ENCODE measurements at regions of chr16 and their contacts with region 1.

Region 1: DNA sequence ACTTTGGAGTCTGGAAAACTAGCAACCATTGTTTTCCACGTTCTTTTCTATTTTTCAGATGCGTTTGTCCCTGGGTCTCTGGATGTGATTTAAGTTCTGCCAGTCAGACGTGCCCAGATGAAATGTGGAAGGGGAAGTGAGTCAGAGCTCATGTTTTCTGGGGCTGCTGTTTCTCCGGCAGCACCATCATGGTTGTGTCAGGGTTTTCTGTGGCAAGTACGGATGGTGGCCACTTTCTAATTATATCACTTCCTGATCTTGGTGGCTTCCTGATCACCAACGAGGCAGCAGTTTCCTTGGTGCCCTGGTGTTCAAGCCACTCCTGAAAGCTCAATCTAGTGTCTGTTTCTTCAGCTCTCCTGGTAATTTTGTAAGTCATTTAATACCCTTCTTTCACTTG is 31.4 kb upstream of the PMFBP1 start:
- DNase-seq: no peak
- H3K4me3 ChIP-seq: no peak overlapping the region
- H3K4me3 Mint-ChIP-seq: no peak overlapping the region
- H3K27ac Mint-ChIP-seq: no peak overlapping the region
- H3K4me1 ChIP-seq: peaks cover 14% of the 10 kb centered on the region
- H3K4me1 Mint-ChIP-seq: peaks cover 12% of the 10 kb centered on the region
- H3K27me3 ChIP-seq: peaks cover 2% of the 10 kb centered on the region; the same call in 1 of the 2 replicates
- H3K27me3 Mint-ChIP-seq: peaks cover 19% of the 10 kb centered on the region
- CTCF ChIP-seq: no peak

Region 2: GRCh38 chr16:72224260-72224768 is 20.9 kb after region 1 on chr16:
- CTCF ChIA-PET with region 1: no interaction called
- POLR2A ChIA-PET with region 1: no interaction called
- intact Hi-C with region 1: loop called (anchors 1 kb)
- DNase-seq: peak; percentile 67 to 70
- H3K4me3 ChIP-seq: no peak overlapping the region
- H3K4me3 Mint-ChIP-seq: peak overlapping the region; percentile 56
- H3K27ac Mint-ChIP-seq: peak overlapping the region; percentile 46
- H3K4me1 ChIP-seq: peaks cover 17% of the 10 kb centered on the region
- H3K4me1 Mint-ChIP-seq: peaks cover 10% of the 10 kb centered on the region
- H3K27me3 ChIP-seq: no peaks in the 10 kb centered on the region
- H3K27me3 Mint-ChIP-seq: no peaks in the 10 kb centered on the region
- CTCF ChIP-seq: no peak

Measured in Caco-2 (cell line).